Calu3 (cell line): ENCODE measurements at regions of chr12 and their contacts with region 1.

Region 1: GRCh38 chr12:107670999-107671643 is 14.5 kb upstream of the PWP1 start:
- DNase-seq: peak; percentile 38
- H3K4me3 Mint-ChIP-seq: no peak overlapping the region
- H3K27ac Mint-ChIP-seq: no peak overlapping the region
- H3K4me1 Mint-ChIP-seq: no peaks in the 10 kb centered on the region
- H3K27me3 Mint-ChIP-seq: peaks cover 81% of the 10 kb centered on the region
- CTCF ChIP-seq: peak; percentile 23

Region 2: DNA sequence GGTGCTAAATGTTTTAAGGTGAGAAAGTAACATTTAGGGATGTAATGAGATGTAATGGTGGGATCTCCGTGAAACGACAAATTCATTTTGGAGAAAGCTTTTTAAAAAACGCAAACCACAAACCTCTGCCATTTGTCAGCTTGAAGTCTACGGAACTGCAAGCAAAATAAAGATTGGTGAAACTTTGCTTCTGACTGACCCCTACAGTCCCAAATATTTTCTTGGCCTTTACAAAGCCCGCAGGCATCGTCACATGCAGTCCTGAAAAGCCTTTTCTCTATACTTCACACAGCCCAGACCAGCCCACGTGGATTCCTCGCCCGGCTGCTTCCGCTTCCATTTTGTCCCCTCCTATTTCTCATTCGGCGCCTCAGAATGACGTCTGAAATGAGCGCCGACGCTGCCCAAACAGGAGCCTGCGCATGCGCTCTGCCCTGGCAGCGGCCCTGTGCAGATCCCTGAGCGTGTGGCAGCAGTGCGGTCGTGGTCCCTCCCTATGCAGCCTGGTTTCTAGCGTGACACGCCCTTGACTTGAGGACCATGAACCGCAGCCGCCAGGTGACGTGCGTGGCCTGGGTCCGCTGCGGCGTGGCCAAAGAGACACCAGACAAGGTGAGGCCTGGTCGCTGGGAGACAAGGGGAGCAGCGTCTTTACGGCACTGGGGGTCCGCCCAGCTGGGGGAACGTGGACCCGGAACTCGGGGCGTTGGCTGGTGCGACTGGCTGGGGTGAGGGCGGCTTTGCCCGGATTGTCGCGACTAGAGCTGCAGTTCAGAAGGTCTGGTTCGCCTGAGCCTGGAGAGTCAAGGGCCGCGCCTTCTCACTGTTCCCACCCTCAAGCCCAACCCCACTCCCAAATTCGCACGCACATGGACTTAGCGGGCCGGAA is 14.5 kb after region 1 on chr12 and contains the start of gene PWP1:
- CTCF ChIA-PET with region 1: interaction called, 11 read pairs
- intact Hi-C with region 1: no loop called
- DNase-seq: peak; percentile 96
- H3K4me3 Mint-ChIP-seq: peak within 1 kb of the TSS; percentile 94
- H3K27ac Mint-ChIP-seq: peak within 1 kb of the TSS; percentile 96
- H3K4me1 Mint-ChIP-seq: no peaks in the 10 kb centered on the region
- H3K27me3 Mint-ChIP-seq: peaks cover 6% of the 10 kb centered on the region
- CTCF ChIP-seq: no peak
- total RNA-seq, gene PWP1: 52.7 and 60.5 TPM in 2 replicates

Region 3: DNA sequence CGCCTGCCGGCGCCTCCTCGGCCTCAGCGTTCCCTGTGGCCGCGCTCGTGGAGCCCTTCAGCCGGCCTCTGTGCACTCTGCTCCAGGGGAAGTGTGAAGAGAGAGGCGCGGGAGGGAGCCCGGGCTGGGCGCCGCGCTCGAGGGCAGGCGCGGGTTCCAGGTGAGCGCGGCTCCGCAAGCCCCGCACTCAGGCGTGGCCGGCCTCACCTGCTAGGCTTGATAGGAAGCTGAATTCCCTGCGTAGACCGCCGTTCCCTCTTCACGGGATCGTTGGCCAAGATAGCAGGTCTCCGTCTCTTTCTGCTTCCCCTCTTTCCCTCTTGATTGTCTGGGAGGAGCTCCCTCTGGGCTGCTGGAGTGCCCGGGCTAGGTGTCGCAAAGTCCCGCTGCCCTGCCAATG is 193.1 kb after region 1 on chr12:
- CTCF ChIA-PET with region 1: no interaction called
- intact Hi-C with region 1: no loop called
- DNase-seq: no peak
- H3K4me3 Mint-ChIP-seq: no peak overlapping the region
- H3K27ac Mint-ChIP-seq: no peak overlapping the region
- H3K4me1 Mint-ChIP-seq: no peaks in the 10 kb centered on the region
- H3K27me3 Mint-ChIP-seq: peaks cover 37% of the 10 kb centered on the region
- CTCF ChIP-seq: no peak

Region 4: DNA sequence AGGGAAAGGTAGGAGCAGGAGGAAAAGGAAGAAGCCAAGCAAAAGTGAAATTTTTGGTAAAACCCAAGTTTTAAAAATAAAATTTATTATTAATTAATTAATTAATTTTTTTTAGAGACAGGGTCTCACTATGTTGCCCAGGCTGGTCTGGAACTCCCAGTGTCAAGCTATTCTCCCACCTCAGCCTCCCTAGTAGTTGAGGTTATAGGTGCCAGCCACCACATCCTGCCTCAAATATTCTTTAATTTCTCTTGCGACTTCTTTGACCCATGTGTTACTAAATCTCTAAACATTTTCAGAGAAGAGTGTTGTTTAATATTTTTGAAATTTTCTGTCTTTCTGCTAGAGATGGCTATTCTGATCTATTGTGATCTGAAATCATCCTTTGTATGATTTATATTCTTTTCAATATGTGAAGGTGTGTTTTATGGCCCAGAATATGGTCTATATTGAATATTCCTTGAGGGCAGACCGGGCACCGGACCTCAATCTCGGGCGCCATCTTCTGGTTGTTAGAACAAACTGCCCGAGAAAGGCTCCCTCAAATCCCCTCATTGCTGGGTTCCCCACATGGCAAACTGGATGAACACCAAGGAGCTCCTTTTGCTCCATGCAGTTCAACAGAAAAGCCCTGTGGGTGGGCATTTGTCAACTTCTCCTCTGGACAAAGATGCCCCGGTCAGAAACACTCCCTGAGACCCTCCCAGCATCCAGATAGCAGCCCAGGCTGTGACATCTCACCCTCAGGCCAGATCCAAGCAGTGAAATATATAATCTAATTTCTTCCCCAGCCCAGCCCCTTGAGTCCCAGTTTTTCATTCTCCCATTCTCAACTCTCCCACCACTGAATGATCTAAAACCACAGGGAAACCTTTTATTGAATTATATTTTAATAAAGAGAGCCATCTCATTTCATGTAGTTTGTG is 213.9 kb after region 1 on chr12:
- CTCF ChIA-PET with region 1: interaction called, 11 read pairs
- intact Hi-C with region 1: loop called (anchors 1 kb)
- DNase-seq: peak; percentile 59
- H3K4me3 Mint-ChIP-seq: no peak overlapping the region
- H3K27ac Mint-ChIP-seq: no peak overlapping the region
- H3K4me1 Mint-ChIP-seq: no peaks in the 10 kb centered on the region
- H3K27me3 Mint-ChIP-seq: peaks cover 79% of the 10 kb centered on the region
- CTCF ChIP-seq: peak; percentile 77